GM10248 (cell line): ENCODE measurements at regions of chr7 and their contacts with region 1.

Region 1: GRCh38 chr7:1156782-1157535 is 3.0 kb downstream of the ZFAND2A start:
- DNase-seq: no peak
- CTCF ChIP-seq: no peak

Region 2: DNA sequence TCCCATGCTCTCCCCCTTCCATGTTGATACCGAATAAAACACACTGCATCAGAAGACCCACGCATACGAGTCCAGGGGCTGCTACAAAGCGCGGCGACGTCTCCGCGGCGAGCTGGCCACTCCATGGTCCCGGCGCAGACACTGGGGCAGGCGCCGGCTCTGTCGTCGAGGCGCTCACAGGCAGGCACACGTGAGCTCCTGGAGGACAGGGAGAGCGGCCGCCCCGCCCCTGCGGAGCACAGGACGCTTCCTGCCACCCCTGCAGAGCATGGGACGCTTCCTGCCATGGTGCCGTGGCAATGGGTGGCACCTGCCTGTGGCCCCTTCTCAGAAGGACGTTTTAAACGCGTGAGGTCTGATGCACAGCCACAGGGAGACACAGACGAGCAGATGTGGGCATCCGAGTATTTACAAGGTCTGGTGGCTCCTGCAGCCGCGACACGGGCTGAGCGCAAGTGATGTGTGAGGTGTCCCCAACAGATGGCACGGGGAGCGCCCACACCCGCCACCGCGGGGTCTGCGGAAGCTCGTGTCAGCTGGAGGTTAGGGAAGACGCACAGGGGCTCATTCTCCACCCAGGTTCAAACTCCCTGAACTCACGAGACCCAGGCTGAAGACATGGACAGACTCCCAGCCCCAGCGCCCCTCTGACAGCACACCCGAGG is 134.0 kb before region 1 on chr7:
- CTCF ChIA-PET with region 1: no interaction called
- POLR2A ChIA-PET with region 1: interaction called, 10 read pairs
- DNase-seq: no peak
- CTCF ChIP-seq: no peak

Region 3: GRCh38 chr7:1144269-1144771 is 12.6 kb before region 1 on chr7:
- CTCF ChIA-PET with region 1: interaction called, 10 read pairs
- POLR2A ChIA-PET with region 1: interaction called, 6 read pairs
- DNase-seq: peak; percentile 52
- CTCF ChIP-seq: peak; percentile 58